GM18951 (cell line): ENCODE measurements at regions of chr14 and their contacts with region 1.

Region 1: DNA sequence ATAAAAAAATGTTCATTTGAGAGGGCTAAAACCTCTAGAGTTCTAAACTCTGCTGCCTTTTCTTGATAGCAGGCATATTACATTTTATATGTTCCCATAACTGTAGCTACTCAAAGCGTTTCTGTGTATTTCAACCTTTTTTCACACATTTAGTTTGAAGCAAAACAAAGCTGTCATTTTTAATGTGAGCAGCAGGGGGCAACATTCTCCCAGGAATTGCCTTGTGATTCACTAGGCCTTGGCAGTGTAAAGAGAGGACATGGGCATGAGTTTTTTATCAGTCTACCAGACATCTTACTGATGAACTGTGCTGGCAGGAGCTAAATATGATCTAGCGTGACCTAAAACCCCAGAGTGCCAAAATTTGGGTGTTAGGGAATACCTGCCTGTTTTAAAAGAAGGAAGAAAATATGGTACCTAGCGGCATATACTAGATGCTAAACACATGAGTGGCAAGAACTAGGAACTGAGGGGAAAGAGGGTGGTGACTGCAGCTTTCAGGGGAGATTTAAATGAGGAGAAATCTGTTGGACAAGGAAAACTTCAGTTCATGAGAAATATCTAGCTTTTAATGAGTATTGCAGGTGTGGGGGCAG is 65.3 kb downstream of the IFT43 start:
- POLR2A ChIP-seq: no peak

Region 2: DNA sequence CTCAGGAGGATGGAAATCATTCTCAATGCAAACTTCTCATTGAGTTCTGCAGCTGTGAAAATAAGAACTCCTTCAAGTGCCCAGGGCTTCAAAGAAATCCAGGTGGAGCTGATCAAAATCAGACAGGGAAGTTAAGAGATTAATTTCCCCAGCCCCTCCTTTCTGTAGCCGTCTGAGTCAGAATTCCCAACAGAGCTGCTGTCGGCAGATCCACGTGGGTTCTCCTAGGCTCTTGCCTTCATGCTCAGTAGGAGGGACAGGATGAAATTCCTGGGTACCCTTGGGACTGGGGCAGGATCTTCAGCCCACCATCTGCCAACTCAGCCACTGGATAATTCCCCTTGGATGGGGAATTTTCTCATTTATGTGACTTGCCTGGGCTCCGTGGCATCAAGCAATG is 82.4 kb before region 1 on chr14:
- in situ Hi-C with region 1: no loop called
- POLR2A ChIP-seq: no peak

Region 3: GRCh38 chr14:76352639-76353281 is 301.9 kb after region 1 on chr14:
- in situ Hi-C with region 1: loop called (anchors 10 kb)
- POLR2A ChIP-seq: no peak

Region 4: GRCh38 chr14:76647697-76648298 is 596.9 kb after region 1 on chr14:
- in situ Hi-C with region 1: loop called (anchors 25 kb)
- POLR2A ChIP-seq: no peak